Esophagus muscularis mucosa (tissue), 4 donors: ENCODE measurements at regions of chr5 and their contacts with region 1.

Region 1: GRCh38 chr5:131796793-131797693 is at the start of gene FNIP1:
- DNase-seq: peak; percentile 100
- H3K4me3 ChIP-seq: peak within 1 kb of the TSS; percentile 80 to 99 (median 90)
- H3K27ac ChIP-seq: peak within 1 kb of the TSS; percentile 99 to 100 (median 99)
- H3K4me1 ChIP-seq: peaks cover 5 to 46% (median 40%) of the 10 kb centered on the region in 4 donors
- H3K27me3 ChIP-seq: no peaks in the 10 kb centered on the region
- CTCF ChIP-seq: no peak
- EP300 ChIP-seq: no peak
- POLR2A ChIP-seq: peak; percentile 94
- total RNA-seq, gene FNIP1: 36.6 to 52.7 (median 50.1) TPM

Region 2: DNA sequence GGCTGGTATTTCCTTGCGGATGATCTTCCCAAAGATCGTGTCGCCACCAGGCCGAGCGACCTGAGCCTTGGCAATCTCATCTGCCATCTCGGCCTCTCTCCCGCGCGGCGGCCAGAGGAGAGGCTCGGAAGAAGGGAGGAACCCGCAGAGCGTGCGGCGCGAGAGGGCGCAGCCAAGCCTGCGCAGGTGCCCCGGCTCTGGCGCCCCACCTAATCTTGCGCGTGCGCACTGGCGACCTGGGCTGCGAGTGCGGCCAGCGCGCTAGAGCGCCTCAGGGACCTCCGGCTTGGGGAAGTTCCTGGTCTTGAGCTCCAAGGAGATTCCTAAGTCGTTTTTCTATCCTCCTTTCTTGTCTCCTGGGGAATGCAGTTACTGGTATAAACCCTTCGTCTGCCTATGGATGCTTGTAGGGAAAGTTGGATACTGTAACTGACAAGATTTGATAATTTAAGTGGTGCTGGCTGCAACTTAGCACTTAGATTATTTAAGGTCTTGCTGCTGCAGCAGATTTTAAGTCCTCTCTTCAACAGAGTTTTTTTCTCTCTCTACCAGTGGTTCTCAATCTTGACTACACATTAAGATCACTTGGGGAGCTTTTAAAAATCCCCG is 631.8 kb before region 1 on chr5 and contains the start of gene HINT1:
- intact Hi-C with region 1: loop called (anchors 10 kb)
- DNase-seq: peak; percentile 95
- H3K4me3 ChIP-seq: peak within 1 kb of the TSS; percentile 74 to 94 (median 78)
- H3K27ac ChIP-seq: peak within 1 kb of the TSS; percentile 90 to 97 (median 92)
- H3K4me1 ChIP-seq: peaks cover 10 to 30% (median 27%) of the 10 kb centered on the region in 4 donors
- H3K27me3 ChIP-seq: no peaks in the 10 kb centered on the region
- CTCF ChIP-seq: peak in 2 of 3 experiments; percentile 22 to 44
- EP300 ChIP-seq: no peak
- POLR2A ChIP-seq: peak; percentile 79
- total RNA-seq, gene HINT1: 129 to 251 (median 201) TPM

Region 3: DNA sequence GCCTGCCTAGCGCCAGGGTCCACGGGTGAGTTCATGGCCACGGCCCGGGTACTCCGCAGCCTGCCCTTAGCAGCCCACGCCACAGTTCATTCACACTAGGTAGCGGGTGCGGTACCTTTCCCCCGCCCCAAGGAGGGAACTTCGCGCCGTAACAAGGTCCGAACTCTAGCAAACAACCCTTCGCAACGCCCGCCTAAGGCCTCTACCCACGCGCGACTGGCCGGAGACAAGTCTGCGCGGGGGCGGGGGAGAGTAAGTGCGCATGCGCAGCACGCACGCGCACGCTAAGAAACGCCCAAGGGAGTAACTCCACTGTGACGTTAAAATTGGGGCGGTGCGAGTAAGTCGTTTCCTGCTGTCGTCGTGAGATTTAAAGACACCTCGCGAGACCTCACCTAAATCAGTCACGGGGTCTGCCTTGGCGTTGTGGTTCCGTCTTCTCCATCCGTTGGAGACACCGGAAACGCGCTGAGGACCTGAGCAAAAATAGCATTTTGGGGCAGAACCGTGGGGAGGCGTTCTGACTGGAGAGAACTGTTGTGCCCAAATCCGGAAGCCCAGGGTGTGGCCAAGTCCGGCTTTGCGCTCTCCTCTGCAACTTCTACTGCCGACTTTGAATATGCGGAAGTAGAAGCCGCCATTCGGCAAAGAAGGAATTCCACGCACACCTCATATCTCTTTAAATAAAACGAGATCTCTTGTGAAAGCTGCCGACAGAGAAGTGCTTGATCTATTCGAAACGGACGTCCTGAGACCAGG is 161.9 kb before region 1 on chr5 and contains the start of gene RAPGEF6:
- intact Hi-C with region 1: loop called (anchors 5 kb)
- DNase-seq: peak; percentile 99
- H3K4me3 ChIP-seq: peak within 1 kb of the TSS; percentile 69 to 79 (median 74)
- H3K27ac ChIP-seq: peak within 1 kb of the TSS; percentile 92 to 98 (median 97)
- H3K4me1 ChIP-seq: peaks cover 19 to 50% (median 47%) of the 10 kb centered on the region in 4 donors
- H3K27me3 ChIP-seq: no peaks in the 10 kb centered on the region
- CTCF ChIP-seq: no peak
- EP300 ChIP-seq: no peak
- POLR2A ChIP-seq: peak; percentile 57
- total RNA-seq, gene RAPGEF6: 17.2 to 23.3 (median 20.1) TPM

Region 4: GRCh38 chr5:131679913-131680312 is 117.1 kb before region 1 on chr5:
- intact Hi-C with region 1: loop called (anchors 10 kb)
- DNase-seq: no peak
- H3K4me3 ChIP-seq: no peak overlapping the region
- H3K27ac ChIP-seq: no peak overlapping the region
- H3K4me1 ChIP-seq: peaks cover 5 to 36% (median 30%) of the 10 kb centered on the region in 4 donors
- H3K27me3 ChIP-seq: no peaks in the 10 kb centered on the region
- CTCF ChIP-seq: no peak
- EP300 ChIP-seq: no peak
- POLR2A ChIP-seq: no peak

Region 5: DNA sequence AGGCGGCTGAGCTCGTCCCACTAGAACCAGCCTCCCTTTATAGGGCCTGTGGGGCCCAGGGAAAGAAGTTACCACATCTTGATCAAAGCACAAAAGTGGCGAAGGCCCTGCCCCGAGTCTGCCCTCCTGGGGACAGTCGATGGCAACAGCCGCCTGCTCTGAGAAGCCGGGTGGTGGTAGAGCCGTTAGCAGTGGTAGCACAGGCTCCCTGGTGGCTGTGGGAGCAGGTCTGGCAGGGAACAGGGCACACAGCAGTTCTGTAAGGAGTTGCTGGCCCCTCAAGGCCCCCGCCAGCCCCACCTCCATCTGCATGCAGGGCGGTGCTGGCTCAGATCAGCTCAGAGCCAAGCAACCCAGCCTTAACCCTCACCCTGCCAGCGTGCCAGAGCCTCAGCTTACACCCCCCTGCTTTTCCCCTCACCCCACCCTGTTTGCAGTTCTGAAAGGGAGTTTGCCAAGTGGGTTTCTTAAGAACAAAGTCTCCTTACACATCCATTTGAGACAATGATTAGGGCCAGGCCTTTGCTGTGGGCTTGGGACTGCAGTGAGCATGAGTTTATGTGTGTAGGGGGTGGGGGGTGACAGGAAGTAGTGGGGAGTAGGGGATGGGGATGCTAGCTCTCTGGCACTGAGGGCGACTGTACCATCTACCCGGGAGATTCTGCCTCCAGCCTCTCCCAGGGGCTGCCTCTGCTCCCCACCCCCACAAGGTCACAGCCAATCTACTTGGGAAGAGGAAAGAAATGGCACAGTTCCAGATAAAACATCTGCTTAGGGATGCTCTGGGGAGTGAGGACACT is 202.6 kb after region 1 on chr5:
- intact Hi-C with region 1: no loop called
- DNase-seq: no peak
- H3K4me3 ChIP-seq: no peak overlapping the region
- H3K27ac ChIP-seq: no peak overlapping the region
- H3K4me1 ChIP-seq: peaks cover 8 to 17% (median 12%) of the 10 kb centered on the region in 4 donors
- H3K27me3 ChIP-seq: no peaks in the 10 kb centered on the region
- CTCF ChIP-seq: no peak
- EP300 ChIP-seq: no peak
- POLR2A ChIP-seq: no peak